ENCODE measurements at regions of chr14 and their contacts with region 1.

Region 1: GRCh38 chr14:25132732-25133422 is 82.9 kb upstream of the STXBP6 start:
- DNase-seq: peak; percentile 62
- ATAC-seq: peak; percentile 96
- H3K4me3 Mint-ChIP-seq: no peak overlapping the region
- H3K27ac Mint-ChIP-seq: no peak overlapping the region
- H3K4me1 Mint-ChIP-seq: peaks cover 4% of the 10 kb centered on the region
- H3K27me3 Mint-ChIP-seq: peaks cover 33% of the 10 kb centered on the region
- CTCF ChIP-seq: peak; percentile 77

Region 2: GRCh38 chr14:25150934-25151790 is 18.3 kb after region 1 on chr14:
- CTCF ChIA-PET with region 1: interaction called, 11 read pairs
- POLR2A ChIA-PET with region 1: no interaction called
- intact Hi-C with region 1: no loop called
- DNase-seq: no peak
- ATAC-seq: no peak
- H3K4me3 Mint-ChIP-seq: no peak overlapping the region
- H3K27ac Mint-ChIP-seq: no peak overlapping the region
- H3K4me1 Mint-ChIP-seq: no peaks in the 10 kb centered on the region
- H3K27me3 Mint-ChIP-seq: peaks cover 5% of the 10 kb centered on the region
- CTCF ChIP-seq: peak; percentile 80